Activated B cell treated with CpG ODN at 0.5 μM for 24 hours (primary cell): ENCODE measurements at regions of chr11 and their contacts with region 1.

Region 1: DNA sequence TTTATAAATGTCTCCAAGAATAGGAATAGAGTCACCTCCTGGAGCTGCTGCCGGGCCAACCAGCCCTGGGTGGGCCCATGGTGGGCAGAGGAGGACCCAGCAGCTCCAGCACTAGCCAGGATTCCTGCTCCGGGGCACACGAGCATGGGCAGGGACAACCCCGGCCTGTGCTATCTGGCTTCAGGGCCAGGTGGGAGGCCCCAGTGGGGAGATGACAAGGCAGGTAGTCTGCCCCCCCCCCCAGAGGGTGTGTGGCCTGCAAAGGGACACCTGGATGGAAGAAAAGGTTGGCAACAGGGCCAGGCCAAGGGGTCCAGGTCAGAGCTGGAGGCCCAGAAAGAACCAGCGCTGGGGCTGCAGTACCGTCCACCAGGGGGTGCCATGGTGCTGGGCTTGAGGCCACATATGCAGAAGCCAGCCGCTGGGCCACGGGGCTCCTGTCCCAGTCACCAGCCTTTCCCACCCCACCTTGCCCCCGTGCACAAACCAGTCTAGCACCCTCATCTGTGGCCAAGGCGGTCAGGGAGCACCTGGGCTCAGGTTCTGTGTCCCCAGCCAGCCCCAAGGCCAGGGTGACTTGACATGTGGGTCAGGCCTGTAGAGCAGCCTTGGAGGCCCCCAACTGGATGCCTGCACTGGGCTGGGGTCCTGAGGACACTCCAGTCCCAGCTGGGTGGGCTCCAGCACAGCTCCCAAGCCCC is 3.5 kb downstream of the TSPAN32 start:
- DNase-seq: peak; percentile 82
- ATAC-seq: peak; percentile 59
- H3K4me3 Mint-ChIP-seq: peak overlapping the region; percentile 32
- H3K27ac Mint-ChIP-seq: peak overlapping the region; percentile 18
- H3K4me1 Mint-ChIP-seq: peaks cover 60% of the 10 kb centered on the region
- H3K27me3 Mint-ChIP-seq: no peaks in the 10 kb centered on the region
- CTCF ChIP-seq: no peak

Region 2: GRCh38 chr11:2166091-2166851 is 139.0 kb before region 1 on chr11:
- CTCF ChIA-PET with region 1: no interaction called
- POLR2A ChIA-PET with region 1: no interaction called
- intact Hi-C with region 1: loop called (anchors 1 kb)
- DNase-seq: no peak
- ATAC-seq: peak; percentile 70
- H3K4me3 Mint-ChIP-seq: no peak overlapping the region
- H3K27ac Mint-ChIP-seq: no peak overlapping the region
- H3K4me1 Mint-ChIP-seq: no peaks in the 10 kb centered on the region
- H3K27me3 Mint-ChIP-seq: peaks cover 9% of the 10 kb centered on the region
- CTCF ChIP-seq: no peak

Region 3: DNA sequence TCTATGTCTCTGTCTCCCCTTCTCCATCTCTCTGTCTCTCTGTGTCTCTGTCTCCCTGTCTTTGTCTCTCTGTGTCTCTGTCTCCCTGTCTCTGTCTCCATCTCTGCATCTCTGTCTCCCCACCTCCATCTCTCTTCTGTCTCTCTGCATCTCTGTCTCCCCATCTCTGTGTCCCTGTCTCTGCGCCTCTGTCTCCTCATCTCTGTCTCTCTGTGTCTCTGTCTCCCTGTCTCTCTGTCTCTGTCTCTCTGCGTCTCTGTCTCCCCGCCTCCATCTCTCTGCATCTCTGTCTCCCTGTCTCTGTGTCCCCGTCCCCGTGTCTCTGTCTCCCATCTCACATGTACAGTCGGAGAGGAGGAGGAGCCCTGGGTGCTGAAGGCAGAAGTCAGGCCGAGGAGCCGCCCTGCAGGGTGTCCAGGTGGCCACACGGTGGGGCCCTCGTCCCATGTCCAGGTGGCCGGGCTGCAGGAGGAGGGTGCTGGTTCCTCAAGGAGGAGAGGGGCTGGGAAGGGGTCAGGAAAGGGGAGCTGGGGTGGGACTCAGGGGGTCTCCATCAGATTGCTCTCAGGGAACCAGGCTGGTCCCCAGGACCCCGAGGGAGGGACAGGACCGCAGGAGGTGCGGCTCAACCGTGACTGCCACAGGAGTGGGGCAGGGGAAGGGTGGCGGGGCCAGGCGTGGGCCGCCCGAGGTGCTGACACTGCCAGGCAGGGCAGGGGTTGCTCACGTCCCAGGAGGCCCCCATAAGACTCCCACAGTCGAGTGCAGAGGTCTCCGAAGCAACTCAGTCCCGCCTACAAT is 108.1 kb before region 1 on chr11:
- CTCF ChIA-PET with region 1: interaction called, 18 read pairs
- POLR2A ChIA-PET with region 1: interaction called, 4 read pairs
- intact Hi-C with region 1: loop called (anchors 1 kb)
- DNase-seq: peak; percentile 61
- ATAC-seq: peak; percentile 97
- H3K4me3 Mint-ChIP-seq: no peak overlapping the region
- H3K27ac Mint-ChIP-seq: peak overlapping the region; percentile 9
- H3K4me1 Mint-ChIP-seq: peaks cover 6% of the 10 kb centered on the region
- H3K27me3 Mint-ChIP-seq: peaks cover 10% of the 10 kb centered on the region
- CTCF ChIP-seq: peak; percentile 31

Region 4: GRCh38 chr11:2382936-2383851 is 77.9 kb after region 1 on chr11:
- CTCF ChIA-PET with region 1: interaction called, 6 read pairs
- POLR2A ChIA-PET with region 1: interaction called, 20 read pairs
- intact Hi-C with region 1: no loop called
- DNase-seq: no peak
- ATAC-seq: no peak
- H3K4me3 Mint-ChIP-seq: peak overlapping the region; percentile 58
- H3K27ac Mint-ChIP-seq: peak overlapping the region; percentile 84
- H3K4me1 Mint-ChIP-seq: peaks cover 93% of the 10 kb centered on the region
- H3K27me3 Mint-ChIP-seq: no peaks in the 10 kb centered on the region
- CTCF ChIP-seq: no peak

Region 5: GRCh38 chr11:2526808-2527381 is 221.6 kb after region 1 on chr11:
- CTCF ChIA-PET with region 1: interaction called, 6 read pairs
- POLR2A ChIA-PET with region 1: no interaction called
- intact Hi-C with region 1: loop called (anchors 1 kb)
- DNase-seq: peak; percentile 62
- ATAC-seq: peak; percentile 93
- H3K4me3 Mint-ChIP-seq: peak overlapping the region; percentile 80
- H3K27ac Mint-ChIP-seq: peak overlapping the region; percentile 82
- H3K4me1 Mint-ChIP-seq: peaks cover 42% of the 10 kb centered on the region
- H3K27me3 Mint-ChIP-seq: no peaks in the 10 kb centered on the region
- CTCF ChIP-seq: no peak